Gastrocnemius medialis (tissue), 4 donors: ENCODE measurements at regions of chr15 and their contacts with region 1.

Region 1: GRCh38 chr15:61227269-61227949 is 1.7 kb downstream of the RORA start:
- DNase-seq: peak in 1 of 2 donors; percentile 24
- ATAC-seq: peak in 1 of 2 donors; percentile 46
- H3K4me3 ChIP-seq: peak overlapping the region; percentile 64 to 92 (median 86)
- H3K27ac ChIP-seq: peak overlapping the region; percentile 81 to 87 (median 81)
- H3K4me1 ChIP-seq: peaks cover 38 to 43% of the 10 kb centered on the region in 2 donors
- H3K27me3 ChIP-seq: no peaks in the 10 kb centered on the region
- CTCF ChIP-seq: no peak
- POLR2A ChIP-seq: peak in 1 of 2 donors; percentile 9

Region 2: DNA sequence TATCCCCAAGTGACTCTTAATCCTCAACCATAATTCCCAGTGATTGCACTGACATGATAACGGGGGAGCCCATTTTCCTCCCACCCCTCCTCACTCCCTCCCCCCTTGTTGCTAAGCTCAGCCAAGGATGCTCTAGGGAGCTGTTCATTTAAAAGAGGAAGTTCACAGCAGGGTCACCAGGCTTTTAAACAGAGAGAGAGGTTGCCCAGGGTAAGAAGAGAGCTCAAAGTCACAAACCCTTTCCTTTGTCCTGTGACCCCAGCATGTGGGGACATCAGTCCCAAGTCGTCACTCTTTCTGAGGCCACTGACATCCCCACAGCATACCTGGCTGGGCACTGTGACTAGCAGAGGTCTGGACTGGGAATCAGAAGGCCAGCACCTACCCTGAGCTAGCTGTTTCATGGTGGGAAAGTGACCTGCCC is 142.5 kb before region 1 on chr15:
- in situ Hi-C with region 1: no loop called
- intact Hi-C with region 1: loop called (anchors 2 kb)
- DNase-seq: no peak
- ATAC-seq: no peak
- H3K4me3 ChIP-seq: no peak overlapping the region
- H3K27ac ChIP-seq: peak overlapping the region in 2 of 4 donors; percentile 16 to 42
- H3K4me1 ChIP-seq: peaks cover 34 to 57% of the 10 kb centered on the region in 2 donors
- H3K27me3 ChIP-seq: no peaks in the 10 kb centered on the region
- CTCF ChIP-seq: no peak
- POLR2A ChIP-seq: no peak

Region 3: DNA sequence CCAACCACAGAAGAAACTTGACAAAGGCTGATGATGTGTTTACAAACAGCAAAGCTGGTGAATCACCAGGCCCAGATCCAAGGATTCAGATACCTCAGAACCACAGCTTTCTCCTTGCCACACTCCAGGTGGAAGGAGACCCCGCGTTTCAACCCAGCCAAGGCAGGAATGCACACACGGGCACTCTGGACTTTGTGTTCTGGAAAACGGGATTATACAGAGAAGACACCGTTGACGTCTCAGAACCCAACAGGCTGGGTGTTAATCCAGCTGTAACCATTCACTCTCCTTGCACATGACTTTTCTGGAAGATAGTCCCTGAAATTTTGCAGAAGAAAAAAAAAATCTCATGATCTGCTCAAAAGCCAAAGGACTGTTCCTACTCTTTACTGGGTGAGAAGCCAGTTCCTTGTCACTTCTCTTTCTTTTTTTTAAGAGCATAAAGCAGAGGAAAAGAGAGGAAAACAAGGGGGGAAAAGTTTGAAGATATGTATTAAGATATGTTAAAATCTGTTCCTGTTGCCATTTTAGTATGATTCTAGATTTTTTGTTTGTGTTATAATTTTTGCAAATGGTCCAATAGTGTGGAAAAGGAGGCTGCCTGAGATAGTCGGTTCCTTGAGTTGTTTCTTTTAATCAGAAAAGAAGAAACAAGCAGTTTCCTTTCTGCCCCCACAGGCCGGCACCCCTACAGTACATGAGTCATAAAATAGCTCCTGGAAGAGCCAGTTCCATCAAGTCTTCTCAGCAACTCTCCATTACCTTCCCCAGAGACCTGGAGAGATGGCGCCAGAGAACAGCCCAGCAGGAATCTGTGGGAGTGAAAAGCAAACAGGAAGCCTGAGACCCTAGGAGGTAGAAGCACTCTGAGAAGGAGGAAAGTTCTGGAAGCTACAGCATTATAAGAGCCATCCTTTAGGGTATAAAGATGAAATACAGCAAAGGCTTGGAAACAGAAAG is 71.4 kb before region 1 on chr15:
- in situ Hi-C with region 1: no loop called
- intact Hi-C with region 1: loop called (anchors 5 kb)
- DNase-seq: peak; percentile 63 to 71
- ATAC-seq: peak; percentile 50 to 69
- H3K4me3 ChIP-seq: no peak overlapping the region
- H3K27ac ChIP-seq: peak overlapping the region; percentile 67 to 80 (median 71)
- H3K4me1 ChIP-seq: peaks cover 41 to 50% of the 10 kb centered on the region in 2 donors
- H3K27me3 ChIP-seq: no peaks in the 10 kb centered on the region
- CTCF ChIP-seq: no peak
- POLR2A ChIP-seq: no peak

Region 4: DNA sequence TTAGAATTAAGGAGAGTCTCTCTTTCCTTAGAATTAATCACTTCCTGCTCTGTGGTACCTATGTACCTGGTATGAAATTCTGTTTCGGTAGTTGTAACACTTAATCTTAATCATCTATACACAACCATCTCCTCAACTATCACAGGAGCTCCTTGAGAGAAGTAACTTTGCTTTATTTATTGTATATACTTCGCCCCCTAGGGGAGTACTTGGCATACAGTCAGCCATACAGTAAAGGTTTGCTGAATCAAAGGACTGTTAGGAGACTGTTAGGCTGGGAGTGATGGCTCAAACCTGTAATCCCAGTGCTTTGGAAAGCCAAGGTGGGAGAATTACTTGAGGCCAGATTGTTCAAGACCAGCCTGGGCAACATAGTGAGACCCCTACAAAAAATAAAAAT is 43.0 kb before region 1 on chr15:
- in situ Hi-C with region 1: no loop called
- intact Hi-C with region 1: no loop called
- DNase-seq: no peak
- ATAC-seq: no peak
- H3K4me3 ChIP-seq: no peak overlapping the region
- H3K27ac ChIP-seq: no peak overlapping the region
- H3K4me1 ChIP-seq: peaks cover 11 to 28% of the 10 kb centered on the region in 2 donors
- H3K27me3 ChIP-seq: no peaks in the 10 kb centered on the region
- CTCF ChIP-seq: no peak
- POLR2A ChIP-seq: no peak

Region 5: GRCh38 chr15:61195116-61196002 is 32.0 kb before region 1 on chr15:
- in situ Hi-C with region 1: no loop called
- intact Hi-C with region 1: loop called (anchors 2 kb)
- DNase-seq: no peak
- ATAC-seq: peak; percentile 73 to 85
- H3K4me3 ChIP-seq: no peak overlapping the region
- H3K27ac ChIP-seq: peak overlapping the region; percentile 78 to 86 (median 83)
- H3K4me1 ChIP-seq: peaks cover 73 to 79% of the 10 kb centered on the region in 2 donors
- H3K27me3 ChIP-seq: no peaks in the 10 kb centered on the region
- CTCF ChIP-seq: peak; percentile 59 to 82 (median 72)
- POLR2A ChIP-seq: peak in 1 of 2 donors; percentile 36

Region 6: GRCh38 chr15:61598655-61599054 is 371.2 kb after region 1 on chr15:
- in situ Hi-C with region 1: no loop called
- intact Hi-C with region 1: no loop called
- DNase-seq: no peak
- ATAC-seq: no peak
- H3K4me3 ChIP-seq: no peak overlapping the region
- H3K27ac ChIP-seq: no peak overlapping the region
- H3K4me1 ChIP-seq: no peaks in the 10 kb centered on the region
- H3K27me3 ChIP-seq: no peaks in the 10 kb centered on the region
- CTCF ChIP-seq: no peak
- POLR2A ChIP-seq: no peak